Activated naive CD4-positive, alpha-beta T cell treated with anti-CD3 and anti-CD28 coated beads for 36 hours (primary cell): ENCODE measurements at regions of chr15 and their contacts with region 1.

Region 1: GRCh38 chr15:100341662-100342560 is at the start of gene ADAMTS17:
- DNase-seq: peak; percentile 96
- H3K4me3 Mint-ChIP-seq: peak within 1 kb of the TSS; percentile 52
- H3K27ac Mint-ChIP-seq: no peak within 1 kb of the TSS
- H3K4me1 Mint-ChIP-seq: peaks cover 9% of the 10 kb centered on the region
- H3K27me3 Mint-ChIP-seq: no peaks in the 10 kb centered on the region
- total RNA-seq, gene ADAMTS17: 0.81 to 1.0 TPM

Region 2: DNA sequence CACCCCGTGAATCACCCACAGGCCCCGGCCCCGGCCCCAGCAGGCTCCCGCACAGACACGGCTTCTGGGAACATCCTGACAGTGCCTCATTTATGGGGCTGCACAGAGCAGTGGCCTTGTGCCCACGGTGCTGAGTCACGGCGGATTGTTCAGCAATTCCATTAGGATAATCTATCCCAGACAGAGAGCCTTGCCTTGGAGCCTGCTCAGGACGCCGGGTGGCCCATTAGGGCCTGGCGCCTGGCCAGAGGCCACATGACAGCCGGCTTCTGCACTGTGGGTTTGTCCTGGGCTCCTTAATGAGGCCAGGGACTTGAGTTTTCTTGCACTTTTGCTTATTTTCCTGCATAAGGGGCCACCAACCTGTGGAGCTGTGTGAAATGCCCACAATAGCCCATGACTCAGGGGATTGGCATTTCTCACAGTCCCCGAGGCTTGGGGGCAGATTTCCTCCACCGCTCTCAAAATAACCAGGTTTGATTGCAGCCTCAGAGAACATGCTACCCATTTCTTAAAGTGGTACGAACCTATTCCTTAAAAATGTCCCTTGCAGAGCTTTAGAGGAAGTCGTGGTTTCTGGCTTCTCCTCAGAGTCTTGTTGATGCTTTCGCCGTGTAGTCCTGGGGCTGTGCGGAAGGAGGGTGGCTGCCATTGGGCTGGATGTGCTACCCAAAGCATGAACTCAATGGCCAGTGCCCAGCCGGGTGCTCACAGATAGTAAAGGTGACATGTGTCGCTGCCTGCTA is 1218.0 kb before region 1 on chr15:
- CTCF ChIA-PET with region 1: no interaction called
- intact Hi-C with region 1: no loop called
- DNase-seq: no peak
- H3K4me3 Mint-ChIP-seq: no peak overlapping the region
- H3K27ac Mint-ChIP-seq: no peak overlapping the region
- H3K4me1 Mint-ChIP-seq: no peaks in the 10 kb centered on the region
- H3K27me3 Mint-ChIP-seq: no peaks in the 10 kb centered on the region

Region 3: GRCh38 chr15:99733268-99734039 is 608.5 kb before region 1 on chr15 and contains the start of gene LYSMD4:
- CTCF ChIA-PET with region 1: no interaction called
- intact Hi-C with region 1: loop called (anchors 10 kb)
- DNase-seq: peak; percentile 99
- H3K4me3 Mint-ChIP-seq: peak within 1 kb of the TSS; percentile 81
- H3K27ac Mint-ChIP-seq: peak within 1 kb of the TSS; percentile 86
- H3K4me1 Mint-ChIP-seq: peaks cover 22% of the 10 kb centered on the region
- H3K27me3 Mint-ChIP-seq: no peaks in the 10 kb centered on the region
- total RNA-seq, gene LYSMD4: 4.9 TPM

Region 4: DNA sequence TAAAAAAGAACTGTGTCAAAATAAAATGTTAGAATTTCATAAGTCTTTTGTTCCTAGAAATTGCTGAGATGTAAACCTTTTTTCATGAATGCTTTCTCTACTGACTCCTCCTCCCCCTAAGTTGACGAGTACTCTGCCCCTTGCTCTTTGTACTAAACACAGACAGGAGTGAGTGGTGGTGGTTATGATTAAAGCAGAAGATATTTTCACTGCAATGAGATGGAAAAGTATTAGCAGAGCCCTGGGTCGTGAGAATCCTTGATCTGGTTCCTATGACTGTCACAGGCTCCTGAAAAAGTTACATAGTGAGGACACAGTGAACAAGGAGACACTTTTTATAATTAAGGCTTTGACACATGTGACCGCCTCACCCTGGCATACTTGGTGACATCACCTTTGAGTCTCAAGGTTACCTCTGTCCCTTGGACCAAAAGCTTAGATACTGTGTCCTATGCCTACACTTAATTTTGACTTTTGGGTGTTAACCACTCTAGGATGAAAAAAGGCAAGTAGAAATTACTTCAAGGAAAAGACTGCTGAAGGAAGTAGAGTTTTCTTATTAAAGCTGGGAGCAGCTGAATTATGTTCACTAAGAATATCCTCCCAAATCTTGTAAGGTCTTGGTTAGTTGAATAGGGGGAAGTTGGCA is 478.2 kb before region 1 on chr15:
- CTCF ChIA-PET with region 1: no interaction called
- intact Hi-C with region 1: no loop called
- DNase-seq: no peak
- H3K4me3 Mint-ChIP-seq: no peak overlapping the region
- H3K27ac Mint-ChIP-seq: no peak overlapping the region
- H3K4me1 Mint-ChIP-seq: peaks cover 3% of the 10 kb centered on the region
- H3K27me3 Mint-ChIP-seq: no peaks in the 10 kb centered on the region

Region 5: GRCh38 chr15:100111103-100112060 is 230.5 kb before region 1 on chr15:
- CTCF ChIA-PET with region 1: interaction called, 4 read pairs
- intact Hi-C with region 1: loop called (anchors 5 kb)
- DNase-seq: peak; percentile 76
- H3K4me3 Mint-ChIP-seq: peak overlapping the region; percentile 44
- H3K27ac Mint-ChIP-seq: peak overlapping the region; percentile 98
- H3K4me1 Mint-ChIP-seq: peaks cover 41% of the 10 kb centered on the region
- H3K27me3 Mint-ChIP-seq: no peaks in the 10 kb centered on the region

Region 6: GRCh38 chr15:100383302-100384107 is 41.6 kb after region 1 on chr15:
- CTCF ChIA-PET with region 1: interaction called, 4 read pairs
- intact Hi-C with region 1: loop called (anchors 2 kb)
- DNase-seq: peak; percentile 49
- H3K4me3 Mint-ChIP-seq: no peak overlapping the region
- H3K27ac Mint-ChIP-seq: no peak overlapping the region
- H3K4me1 Mint-ChIP-seq: no peaks in the 10 kb centered on the region
- H3K27me3 Mint-ChIP-seq: no peaks in the 10 kb centered on the region

Region 7: DNA sequence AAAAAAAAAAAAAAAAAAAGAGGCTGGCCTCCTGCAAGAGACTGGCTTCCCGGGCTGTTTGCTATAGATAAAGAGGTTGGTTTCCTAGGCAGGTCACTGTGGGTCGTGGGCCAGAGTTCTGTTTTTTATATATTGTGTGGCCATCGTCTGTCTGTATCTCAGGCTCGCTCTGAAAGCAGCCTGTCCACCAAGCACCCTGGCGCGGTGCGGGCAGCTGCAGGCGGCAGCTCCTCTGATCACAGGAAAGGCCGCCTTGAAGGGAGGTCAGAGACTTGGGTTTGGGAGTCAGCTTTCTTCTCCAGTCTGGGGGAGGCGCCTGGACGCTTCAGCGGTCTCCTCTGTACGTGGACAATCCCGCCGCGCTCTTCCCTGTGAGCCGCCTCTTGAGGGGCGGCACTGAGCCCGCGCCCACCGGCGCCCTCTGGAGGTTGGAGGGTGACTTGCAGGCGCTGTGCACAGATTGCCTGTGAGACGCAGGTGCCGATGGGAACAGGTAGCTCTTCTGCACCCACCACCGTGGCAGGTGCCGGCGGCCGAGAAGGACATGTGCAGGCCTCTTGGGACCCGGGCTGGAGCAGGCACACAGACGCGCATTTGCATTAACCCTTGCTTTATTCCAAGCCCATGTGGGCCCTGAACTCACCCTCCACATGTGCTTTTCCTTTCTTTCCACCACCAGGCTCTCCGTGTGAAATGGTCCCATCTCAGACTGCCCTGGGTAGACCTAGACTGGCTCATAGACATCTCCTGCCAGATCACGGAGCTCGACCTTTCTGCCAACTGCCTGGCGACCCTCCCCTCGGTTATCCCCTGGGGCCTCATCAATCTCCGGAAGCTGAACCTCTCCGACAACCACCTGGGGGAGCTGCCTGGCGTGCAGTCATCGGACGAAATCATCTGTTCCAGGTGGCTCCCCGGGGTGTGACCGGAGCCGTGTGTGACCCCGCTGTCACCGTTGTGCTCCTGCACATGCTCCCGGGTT is 666.5 kb after region 1 on chr15:
- CTCF ChIA-PET with region 1: interaction called, 3 read pairs
- intact Hi-C with region 1: loop called (anchors 2 kb)
- DNase-seq: peak; percentile 92
- H3K4me3 Mint-ChIP-seq: peak overlapping the region; percentile 81
- H3K27ac Mint-ChIP-seq: no peak overlapping the region
- H3K4me1 Mint-ChIP-seq: peaks cover 18% of the 10 kb centered on the region
- H3K27me3 Mint-ChIP-seq: peaks cover 3% of the 10 kb centered on the region